ENCODE measurements at regions of chr1 and their contacts with region 1.

Region 1: DNA sequence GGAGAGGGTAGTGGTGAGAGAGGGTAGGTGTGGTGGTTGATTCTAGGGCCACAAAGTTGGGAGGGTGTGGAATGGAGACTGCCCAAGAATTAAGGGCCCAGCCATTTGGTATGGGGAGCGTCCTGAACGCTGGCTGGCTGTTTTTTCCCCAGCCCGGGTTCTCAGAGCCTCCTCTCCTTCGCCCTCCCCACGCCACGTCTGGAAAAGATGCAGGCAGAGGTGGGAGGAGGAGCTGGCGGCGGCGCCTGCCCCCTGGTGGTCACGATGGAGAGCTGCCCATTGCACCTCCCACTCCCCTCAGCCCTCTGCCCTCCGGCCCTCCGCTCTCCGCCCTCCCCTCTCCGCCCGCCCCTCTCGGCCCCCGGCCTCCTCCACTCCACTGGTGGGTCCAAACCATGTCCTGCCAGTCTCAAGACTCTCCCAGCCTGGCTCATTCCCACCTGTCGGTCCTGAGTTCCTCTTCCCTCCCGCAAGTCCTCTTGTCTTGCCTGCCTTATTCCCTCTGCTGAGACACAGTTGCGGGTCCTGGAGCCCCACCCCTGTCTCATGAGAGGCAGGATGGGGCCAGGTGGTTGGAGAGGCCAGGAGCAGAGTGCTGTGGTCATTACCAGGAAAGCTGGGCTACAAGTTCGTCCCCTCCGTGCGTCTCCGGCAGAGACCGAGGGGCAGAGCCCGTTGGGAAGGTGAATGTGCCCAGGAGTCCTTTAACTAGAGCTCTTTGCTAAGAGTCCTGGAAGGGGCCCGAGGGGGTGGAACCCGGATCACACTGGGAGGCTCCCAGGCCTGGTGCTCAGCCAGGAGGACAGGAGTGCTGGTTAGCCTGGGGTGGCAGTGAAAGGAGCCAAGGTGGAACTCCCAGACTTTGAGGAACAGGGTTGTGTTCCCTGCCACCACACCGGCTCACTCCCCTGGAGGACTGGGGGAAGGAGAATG is 22.6 kb downstream of the ETNK2 start:
- H3K4me3 ChIP-seq: no peak overlapping the region
- H3K27ac ChIP-seq: no peak overlapping the region
- H3K4me1 ChIP-seq: 0 out of 2 replicates have a peak, but pooled peaks cover 3% of the 10 kb centered on the region
- CTCF ChIP-seq: peak; percentile 83

Region 2: GRCh38 chr1:203835494-203835893 is 293.7 kb before region 1 on chr1:
- CTCF ChIA-PET with region 1: interaction called, 15 read pairs
- POLR2A ChIA-PET with region 1: no interaction called
- H3K4me3 ChIP-seq: no peak overlapping the region
- H3K27ac ChIP-seq: no peak overlapping the region
- H3K4me1 ChIP-seq: no peaks in the 10 kb centered on the region
- CTCF ChIP-seq: no peak

Region 3: GRCh38 chr1:203871107-203871875 is 257.9 kb before region 1 on chr1:
- CTCF ChIA-PET with region 1: interaction called, 167 read pairs
- POLR2A ChIA-PET with region 1: interaction called, 20 read pairs
- H3K4me3 ChIP-seq: no peak overlapping the region
- H3K27ac ChIP-seq: no peak overlapping the region
- H3K4me1 ChIP-seq: no peaks in the 10 kb centered on the region
- CTCF ChIP-seq: peak; percentile 83

Region 4: DNA sequence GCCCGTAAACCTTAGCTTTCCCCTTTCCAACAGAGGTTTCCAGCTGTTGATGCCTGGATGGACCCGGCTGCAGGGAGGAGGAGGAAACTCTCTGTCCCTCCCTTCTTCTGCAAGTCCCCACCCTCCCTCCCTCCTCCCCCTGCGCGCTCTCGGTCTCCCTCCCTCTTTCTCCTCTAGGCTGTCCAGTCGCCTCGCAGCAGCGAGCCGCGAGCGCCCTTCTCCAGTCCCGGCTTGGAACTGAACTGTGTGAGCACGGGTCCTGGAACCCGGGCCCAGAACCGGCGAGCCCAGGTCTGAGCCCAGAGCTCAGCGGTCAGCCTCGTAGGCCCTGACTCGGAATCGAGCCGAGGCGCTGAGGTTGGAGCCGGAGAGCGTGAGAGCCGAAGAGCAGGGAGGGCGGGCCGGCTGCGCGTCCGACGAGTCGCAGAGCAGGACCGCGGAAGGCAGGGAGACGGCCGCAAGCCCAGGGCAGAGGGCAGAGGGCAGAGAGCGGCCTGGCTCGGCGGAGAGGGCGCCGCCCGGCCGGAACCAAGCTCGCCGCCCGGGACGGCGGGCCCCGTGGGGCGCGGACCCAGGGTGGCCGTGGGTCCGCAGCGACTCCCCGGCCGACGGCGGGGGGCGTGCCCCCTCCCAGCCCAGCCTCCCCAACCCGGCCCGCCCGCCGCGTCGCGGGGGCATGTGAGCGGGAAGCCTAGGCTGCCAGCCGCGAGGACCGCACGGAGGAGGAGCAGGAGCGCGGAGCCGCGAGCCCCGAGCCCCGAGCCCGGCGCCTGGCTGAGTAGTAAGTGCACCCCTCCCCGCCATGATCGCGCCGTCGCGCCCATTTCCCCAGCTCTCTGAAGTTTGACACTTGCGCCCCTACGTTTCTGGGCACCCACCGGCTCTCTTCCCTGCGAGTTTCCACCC is 56.0 kb before region 1 on chr1 and contains the start of gene SOX13:
- CTCF ChIA-PET with region 1: interaction called, 11 read pairs
- POLR2A ChIA-PET with region 1: interaction called, 6 read pairs
- H3K4me3 ChIP-seq: peak within 1 kb of the TSS; percentile 64
- H3K27ac ChIP-seq: peak within 1 kb of the TSS; percentile 76; the same call in 1 of the 2 replicates
- H3K4me1 ChIP-seq: 0 out of 2 replicates have a peak, but pooled peaks cover 4% of the 10 kb centered on the region
- CTCF ChIP-seq: peak; percentile 69

Region 5: GRCh38 chr1:204114606-204115005 is 14.6 kb before region 1 on chr1:
- CTCF ChIA-PET with region 1: interaction called, 31 read pairs
- POLR2A ChIA-PET with region 1: no interaction called
- H3K4me3 ChIP-seq: no peak overlapping the region
- H3K27ac ChIP-seq: no peak overlapping the region
- H3K4me1 ChIP-seq: no peaks in the 10 kb centered on the region
- CTCF ChIP-seq: no peak

Region 6: DNA sequence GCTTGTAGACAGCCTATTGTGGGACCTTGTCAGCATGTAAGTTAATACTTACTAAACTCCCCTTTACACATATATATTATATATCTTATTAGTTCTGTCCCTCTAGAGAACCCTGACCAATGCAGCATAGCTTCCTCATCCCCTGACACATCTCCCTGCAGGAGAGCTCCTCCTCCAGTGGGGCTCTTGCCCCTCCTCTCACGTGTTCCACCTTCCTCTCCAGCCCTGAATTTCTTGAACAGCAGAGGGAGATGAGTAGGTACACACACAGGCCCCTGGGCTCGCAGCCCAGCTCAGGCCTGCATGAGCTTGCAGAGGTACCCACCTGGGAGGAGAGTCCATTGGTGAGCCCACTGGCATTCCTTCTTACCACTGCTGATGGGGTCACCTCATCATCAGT is 111.8 kb after region 1 on chr1:
- CTCF ChIA-PET with region 1: no interaction called
- POLR2A ChIA-PET with region 1: no interaction called
- H3K4me3 ChIP-seq: no peak overlapping the region
- H3K27ac ChIP-seq: no peak overlapping the region
- H3K4me1 ChIP-seq: no peaks in the 10 kb centered on the region
- CTCF ChIP-seq: no peak